ENCODE measurements at regions of chr3 and their contacts with region 1.

Region 1: DNA sequence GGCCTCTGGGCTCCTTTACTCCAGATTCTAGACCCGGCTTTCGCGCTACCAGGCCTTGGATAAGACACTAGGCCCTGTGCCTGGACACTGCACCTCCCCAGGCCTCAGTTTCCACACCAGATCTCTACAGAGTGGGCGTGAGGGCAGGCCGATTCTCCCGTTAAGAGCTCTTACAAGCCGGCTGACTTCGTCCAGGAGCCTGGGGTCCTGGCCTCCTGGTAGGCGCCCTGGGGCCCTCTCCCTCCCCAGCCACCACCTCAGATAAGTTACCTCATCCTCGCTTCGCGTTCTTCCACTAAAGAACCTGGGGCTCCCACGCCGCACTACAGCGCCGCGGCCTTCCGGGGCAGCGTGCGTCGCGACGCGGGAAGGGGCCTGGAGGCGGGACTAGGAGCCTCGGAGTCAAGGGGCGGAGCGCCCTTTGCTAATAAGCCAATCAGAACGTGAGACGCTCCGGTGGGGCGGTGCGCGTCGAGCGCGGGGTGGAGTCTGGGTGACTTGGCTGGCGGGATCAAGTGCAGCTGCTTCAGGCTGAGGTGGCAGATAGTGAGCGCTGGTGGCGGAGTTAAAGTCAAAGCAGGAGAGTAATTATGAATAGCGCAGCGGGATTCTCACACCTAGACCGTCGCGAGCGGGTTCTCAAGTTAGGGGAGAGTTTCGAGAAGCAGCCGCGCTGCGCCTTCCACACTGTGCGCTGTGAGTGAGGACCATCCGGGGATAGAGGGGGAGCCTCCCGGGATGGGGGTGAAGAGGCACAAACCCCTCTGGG is at the starts of genes EAF2 and IQCB1:
- DNase-seq: peak; percentile 99
- H3K4me3 ChIP-seq: peak within 1 kb of the TSS; percentile 67 to 81 (median 74)
- H3K27ac ChIP-seq: peak within 1 kb of the TSS; percentile 70 to 86 (median 82)
- H3K4me1 ChIP-seq: peaks cover 16 to 29% (median 22%) of the 10 kb centered on the region in 4 donors
- H3K27me3 ChIP-seq: no peaks in the 10 kb centered on the region
- CTCF ChIP-seq: no peak
- EP300 ChIP-seq: no peak
- POLR2A ChIP-seq: no peak
- total RNA-seq, gene EAF2: 2.1 to 3.6 (median 2.9) TPM
- total RNA-seq, gene IQCB1: 10.4 to 15.6 (median 11.7) TPM

Region 2: GRCh38 chr3:121545574-121546455 is 289.1 kb before region 1 on chr3 and contains the start of gene POLQ:
- intact Hi-C with region 1: loop called (anchors 10 kb)
- DNase-seq: peak; percentile 96
- H3K4me3 ChIP-seq: peak within 1 kb of the TSS; percentile 57 to 64 (median 61)
- H3K27ac ChIP-seq: peak within 1 kb of the TSS; percentile 66 to 79 (median 74)
- H3K4me1 ChIP-seq: peaks cover 7 to 15% (median 9%) of the 10 kb centered on the region in 4 donors
- H3K27me3 ChIP-seq: no peaks in the 10 kb centered on the region
- CTCF ChIP-seq: no peak
- EP300 ChIP-seq: no peak
- POLR2A ChIP-seq: no peak
- total RNA-seq, gene POLQ: under 0.01 to 0.40 (median 0.15) TPM

Region 3: DNA sequence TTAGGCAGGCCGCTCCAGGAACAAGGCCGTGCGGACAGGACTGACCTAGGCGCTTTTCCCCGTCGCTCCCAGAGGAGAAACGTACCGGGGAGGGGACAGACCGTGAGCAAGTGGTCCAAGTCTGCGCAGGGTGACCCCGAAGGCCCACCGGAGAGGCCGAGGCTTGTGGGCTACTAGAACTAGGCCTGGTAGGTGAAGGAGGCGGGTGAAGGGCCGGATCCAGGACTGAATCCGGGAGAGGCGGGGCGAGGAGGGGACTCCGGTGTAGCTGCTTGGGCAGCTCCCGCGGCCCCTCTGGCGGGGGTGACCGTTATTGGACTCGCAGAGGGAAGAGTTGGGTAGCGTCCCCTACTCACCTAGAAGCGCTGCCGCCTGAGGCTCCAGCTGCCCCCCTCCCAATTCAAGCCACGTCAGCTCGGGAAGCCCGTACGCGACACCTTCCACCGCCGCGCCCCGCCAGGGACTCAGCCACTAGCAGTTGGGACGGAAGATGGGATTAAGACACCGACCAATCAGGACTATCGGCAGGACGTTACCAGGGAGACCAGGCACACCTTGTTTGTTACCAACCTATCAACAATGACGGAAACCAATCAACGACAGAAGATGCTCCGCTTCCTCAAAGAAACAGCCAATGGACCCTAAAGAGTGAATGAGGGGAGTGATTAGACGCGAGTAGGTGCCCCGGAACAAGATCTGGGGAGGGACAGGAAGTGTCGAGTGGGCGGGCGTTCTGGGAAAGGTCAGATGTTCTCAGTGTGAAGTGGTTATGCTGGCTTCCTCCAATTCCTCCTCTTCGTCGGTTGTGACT is 85.4 kb before region 1 on chr3 and contains the start of gene GOLGB1:
- intact Hi-C with region 1: loop called (anchors 5 kb)
- DNase-seq: peak; percentile 98
- H3K4me3 ChIP-seq: peak within 1 kb of the TSS; percentile 64 to 91 (median 86)
- H3K27ac ChIP-seq: peak within 1 kb of the TSS; percentile 86 to 93 (median 90)
- H3K4me1 ChIP-seq: peaks cover 28 to 42% (median 32%) of the 10 kb centered on the region in 4 donors
- H3K27me3 ChIP-seq: no peaks in the 10 kb centered on the region
- CTCF ChIP-seq: peak in 1 of 3 experiments; percentile 9
- EP300 ChIP-seq: no peak
- POLR2A ChIP-seq: peak; percentile 95
- total RNA-seq, gene GOLGB1: 55.7 to 73.9 (median 69.3) TPM

Region 4: DNA sequence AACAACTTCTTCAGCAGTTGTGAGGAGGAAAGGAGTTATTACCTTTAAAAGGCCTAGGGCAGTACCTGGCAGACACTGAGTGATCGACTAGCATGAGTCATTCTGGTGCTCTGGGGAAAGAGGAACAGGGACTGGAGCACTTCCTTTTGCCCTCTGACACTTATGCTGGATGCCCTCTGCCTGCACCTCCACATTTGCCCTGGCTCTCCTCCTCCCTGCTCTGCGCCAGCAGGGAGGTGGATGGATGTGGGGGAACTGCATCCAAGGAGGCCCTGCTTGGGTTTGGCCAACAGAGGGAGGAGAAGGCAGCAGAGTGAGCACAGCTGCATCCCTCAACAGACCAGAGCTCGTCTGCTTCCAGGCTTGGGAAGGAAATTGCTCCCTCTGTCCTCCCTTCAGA is 1117.6 kb after region 1 on chr3:
- intact Hi-C with region 1: no loop called
- DNase-seq: no peak
- H3K4me3 ChIP-seq: no peak overlapping the region
- H3K27ac ChIP-seq: no peak overlapping the region
- H3K4me1 ChIP-seq: peaks cover 14 to 18% (median 17%) of the 10 kb centered on the region in 4 donors
- H3K27me3 ChIP-seq: peaks cover 0 to 1% (median 0%) of the 10 kb centered on the region in 4 donors
- CTCF ChIP-seq: peak in 1 of 3 experiments; percentile 10
- EP300 ChIP-seq: no peak
- POLR2A ChIP-seq: no peak